Naive thymus-derived CD4-positive, alpha-beta T cell (primary cell): ENCODE measurements at regions of chr2 and their contacts with region 1.

Region 1: GRCh38 chr2:28359222-28360065 is 33.2 kb upstream of the FOSL2 start:
- DNase-seq: peak; percentile 58 to 87 (median 82)
- ATAC-seq: peak; percentile 86
- H3K4me3 ChIP-seq: peak overlapping the region; percentile 42
- H3K4me3 Mint-ChIP-seq: peak overlapping the region; percentile 76 to 95 (median 84)
- H3K27ac ChIP-seq: peak overlapping the region; percentile 5
- H3K27ac Mint-ChIP-seq: peak overlapping the region; percentile 34 to 96 (median 93)
- H3K4me1 ChIP-seq: peaks cover 36 to 43% of the 10 kb centered on the region in 2 donors
- H3K4me1 Mint-ChIP-seq: peaks cover 34 to 68% (median 38%) of the 10 kb centered on the region in 7 donors
- H3K27me3 ChIP-seq: no peaks in the 10 kb centered on the region
- H3K27me3 Mint-ChIP-seq: peaks cover 0 to 14% (median 0%) of the 10 kb centered on the region in 5 donors

Region 2: GRCh38 chr2:28377984-28378678 is 18.7 kb after region 1 on chr2:
- CTCF ChIA-PET with region 1: no interaction called
- POLR2A ChIA-PET with region 1: interaction called, 3 read pairs
- intact Hi-C with region 1: loop called in 1 of 2 experiments (anchors 2 kb)
- DNase-seq: peak in 1 of 9 donors; percentile 4
- ATAC-seq: peak; percentile 63
- H3K4me3 ChIP-seq: no peak overlapping the region
- H3K4me3 Mint-ChIP-seq: peak overlapping the region in 1 of 10 donors; percentile 62
- H3K27ac ChIP-seq: no peak overlapping the region
- H3K27ac Mint-ChIP-seq: peak overlapping the region in 1 of 9 donors; percentile 80
- H3K4me1 ChIP-seq: peaks cover 18 to 19% of the 10 kb centered on the region in 2 donors
- H3K4me1 Mint-ChIP-seq: peaks cover 13 to 27% (median 18%) of the 10 kb centered on the region in 7 donors
- H3K27me3 ChIP-seq: no peaks in the 10 kb centered on the region
- H3K27me3 Mint-ChIP-seq: peaks cover 0 to 15% (median 0%) of the 10 kb centered on the region in 5 donors

Region 3: DNA sequence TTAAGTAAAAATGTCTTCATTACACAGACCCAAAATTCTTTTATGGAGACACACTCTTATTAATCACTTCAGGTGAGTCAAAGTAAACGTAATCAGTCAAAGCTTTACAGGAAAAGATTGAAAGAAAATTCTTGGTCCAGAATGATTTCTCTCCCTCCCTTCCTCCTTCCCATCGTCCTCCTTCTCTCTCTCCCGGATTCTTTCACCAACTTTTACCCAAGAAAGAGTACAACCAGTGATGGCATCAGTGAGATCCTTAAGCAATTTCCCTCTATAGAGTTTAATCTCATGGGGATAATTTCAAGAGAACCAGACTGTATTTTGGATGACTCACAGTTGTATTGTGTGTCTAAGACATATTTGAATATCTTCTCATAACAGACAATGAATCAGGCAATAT is 1303.8 kb after region 1 on chr2:
- CTCF ChIA-PET with region 1: no interaction called
- POLR2A ChIA-PET with region 1: no interaction called
- intact Hi-C with region 1: no loop called
- DNase-seq: no peak
- ATAC-seq: no peak
- H3K4me3 ChIP-seq: no peak overlapping the region
- H3K4me3 Mint-ChIP-seq: no peak overlapping the region
- H3K27ac ChIP-seq: no peak overlapping the region
- H3K27ac Mint-ChIP-seq: no peak overlapping the region
- H3K4me1 ChIP-seq: no peaks in the 10 kb centered on the region
- H3K4me1 Mint-ChIP-seq: peaks cover 0 to 1% (median 0%) of the 10 kb centered on the region in 7 donors
- H3K27me3 ChIP-seq: peaks cover 0 to 3% of the 10 kb centered on the region in 2 donors
- H3K27me3 Mint-ChIP-seq: peaks cover 5 to 31% (median 13%) of the 10 kb centered on the region in 5 donors